ENCODE measurements at regions of chr11 and their contacts with region 1.

Region 1: DNA sequence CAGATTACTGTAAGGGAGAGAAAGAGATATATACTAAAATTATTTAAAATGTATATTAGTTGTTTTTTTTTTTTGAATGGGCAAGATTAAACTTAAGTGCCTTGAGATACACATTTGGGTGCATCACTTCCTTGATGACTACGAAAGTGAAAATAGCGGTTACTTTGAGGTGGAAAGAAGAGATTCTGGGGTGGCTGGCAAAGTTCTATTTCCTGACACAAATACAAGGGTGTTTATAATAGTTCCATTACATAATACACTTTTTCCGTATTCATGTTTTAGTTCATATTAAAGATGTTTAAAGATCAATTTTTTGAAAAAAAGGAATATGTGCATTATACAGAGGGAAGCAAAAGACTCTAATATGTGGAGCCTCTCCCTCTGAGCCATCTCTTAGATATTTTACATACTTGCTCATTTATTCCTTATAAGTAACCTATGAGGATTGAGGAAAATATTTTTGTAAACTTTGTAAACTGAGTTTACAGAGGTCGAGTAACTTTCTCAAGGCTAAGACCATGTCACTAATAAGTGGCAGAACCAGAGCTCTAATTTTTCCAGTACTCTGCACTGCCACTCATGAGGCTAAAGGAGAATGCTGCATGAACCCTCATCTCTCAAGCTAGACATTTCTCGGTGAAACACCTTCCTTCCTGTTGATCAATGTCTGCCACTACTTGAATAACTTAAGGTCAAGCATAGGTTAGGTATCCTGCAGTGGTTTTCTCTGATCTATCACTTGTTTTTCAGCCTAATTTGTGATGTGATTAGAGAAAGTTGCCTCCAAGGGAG is 58.6 kb downstream of the DDIAS start:
- DNase-seq: peak; percentile 81
- H3K4me3 ChIP-seq: peak overlapping the region; percentile 54
- H3K27ac ChIP-seq: peak overlapping the region; percentile 89
- H3K4me1 ChIP-seq: peaks cover 66% of the 10 kb centered on the region
- CTCF ChIP-seq: no peak

Region 2: GRCh38 chr11:82560836-82561235 is 399.3 kb before region 1 on chr11:
- CTCF ChIA-PET with region 1: no interaction called
- POLR2A ChIA-PET with region 1: no interaction called
- intact Hi-C with region 1: no loop called
- DNase-seq: no peak
- H3K4me3 ChIP-seq: no peak overlapping the region
- H3K27ac ChIP-seq: no peak overlapping the region
- H3K4me1 ChIP-seq: peaks cover 18% of the 10 kb centered on the region
- CTCF ChIP-seq: no peak

Region 3: DNA sequence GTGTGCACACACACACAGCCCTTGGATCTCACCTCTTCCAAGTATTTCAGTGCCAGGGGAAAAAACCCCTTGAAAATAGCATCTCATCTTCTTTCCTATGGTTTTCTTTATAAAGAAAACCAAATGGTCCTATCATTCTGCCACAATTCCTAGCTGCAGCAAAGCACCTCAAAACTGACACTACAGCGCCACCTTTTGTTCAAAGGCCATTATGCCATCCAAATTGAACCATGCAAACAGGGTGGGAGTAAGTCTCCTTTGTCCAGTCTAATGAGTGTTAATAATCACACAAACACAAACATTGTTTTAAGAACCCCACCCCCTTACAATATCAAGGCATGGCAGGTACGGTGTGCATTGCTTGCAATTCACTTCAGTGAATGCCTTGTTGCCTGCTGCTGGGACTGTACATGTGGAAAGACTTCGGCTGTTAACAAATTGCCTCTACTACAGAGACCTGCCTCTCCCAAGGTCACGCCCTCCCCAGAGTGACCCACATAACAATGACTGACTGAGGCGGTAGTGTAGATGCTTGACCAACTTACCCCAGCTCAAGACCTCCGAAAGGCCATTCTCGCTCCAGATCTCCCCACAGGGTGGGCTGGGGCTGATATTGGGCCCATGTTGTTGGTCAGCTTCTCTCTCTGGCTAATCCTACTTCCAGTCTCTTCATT is 258.2 kb before region 1 on chr11:
- CTCF ChIA-PET with region 1: no interaction called
- POLR2A ChIA-PET with region 1: no interaction called
- intact Hi-C with region 1: no loop called
- DNase-seq: peak; percentile 41
- H3K4me3 ChIP-seq: no peak overlapping the region
- H3K27ac ChIP-seq: no peak overlapping the region
- H3K4me1 ChIP-seq: no peaks in the 10 kb centered on the region
- CTCF ChIP-seq: peak; percentile 88

Region 4: DNA sequence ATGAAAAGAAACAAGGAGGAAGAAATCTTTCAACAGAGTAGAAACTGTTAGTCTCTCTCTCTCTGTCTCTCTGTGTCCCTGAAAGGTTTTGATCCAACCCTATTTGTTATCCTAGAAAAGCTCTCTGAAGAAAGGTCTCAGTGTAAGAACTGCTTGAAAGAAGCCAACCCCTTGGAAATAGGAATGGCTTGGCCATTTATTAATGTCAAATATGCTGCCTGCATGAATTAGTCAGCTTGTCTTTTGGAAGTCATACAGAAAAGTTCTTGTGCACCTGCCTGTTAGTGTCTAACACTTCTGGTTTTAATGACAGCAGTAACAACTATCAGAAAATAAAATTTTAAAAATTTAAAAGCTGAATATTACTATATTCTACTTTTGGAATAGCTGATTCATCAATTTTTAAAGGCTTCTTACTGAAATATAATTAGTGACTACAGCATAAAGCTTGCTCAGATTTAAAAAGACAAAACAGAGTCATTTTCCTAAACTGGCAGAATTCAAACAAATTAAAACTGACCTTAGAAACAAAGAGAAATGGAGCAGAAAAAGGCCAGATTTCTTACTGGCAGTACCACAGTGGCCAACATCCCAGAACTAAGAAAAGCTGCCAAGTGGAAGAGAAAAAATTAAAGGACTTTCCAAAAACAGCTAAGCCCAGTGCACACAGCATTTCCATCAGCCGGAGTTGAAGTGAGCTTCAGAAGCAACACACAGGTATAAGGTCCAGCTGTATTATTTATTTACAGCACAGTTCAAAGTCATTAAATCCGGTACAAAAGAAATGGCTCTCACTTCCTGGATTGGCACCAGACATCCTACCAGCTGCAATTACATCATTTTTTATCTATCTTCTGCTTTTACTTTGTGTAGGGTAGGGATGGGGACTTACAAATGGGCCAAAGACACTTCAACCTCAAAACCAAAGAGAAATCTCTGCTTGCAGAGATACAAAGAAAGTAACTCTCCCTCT is 136.2 kb before region 1 on chr11:
- CTCF ChIA-PET with region 1: no interaction called
- POLR2A ChIA-PET with region 1: no interaction called
- intact Hi-C with region 1: no loop called
- DNase-seq: peak; percentile 57
- H3K4me3 ChIP-seq: no peak overlapping the region
- H3K27ac ChIP-seq: no peak overlapping the region
- H3K4me1 ChIP-seq: peaks cover 17% of the 10 kb centered on the region
- CTCF ChIP-seq: no peak

Region 5: GRCh38 chr11:82945682-82946081 is 14.5 kb before region 1 on chr11:
- CTCF ChIA-PET with region 1: interaction called, 3 read pairs
- POLR2A ChIA-PET with region 1: interaction called, 83 read pairs
- intact Hi-C with region 1: no loop called
- DNase-seq: no peak
- H3K4me3 ChIP-seq: no peak overlapping the region
- H3K27ac ChIP-seq: no peak overlapping the region
- H3K4me1 ChIP-seq: peaks cover 16% of the 10 kb centered on the region
- CTCF ChIP-seq: no peak

Region 6: GRCh38 chr11:82974851-82975250 is 14.7 kb after region 1 on chr11:
- CTCF ChIA-PET with region 1: no interaction called
- POLR2A ChIA-PET with region 1: interaction called, 53 read pairs
- intact Hi-C with region 1: no loop called
- DNase-seq: no peak
- H3K4me3 ChIP-seq: peak overlapping the region; percentile 9
- H3K27ac ChIP-seq: peak overlapping the region; percentile 98
- H3K4me1 ChIP-seq: peaks cover 96% of the 10 kb centered on the region
- CTCF ChIP-seq: no peak

Region 7: GRCh38 chr11:83057721-83058120 is 97.5 kb after region 1 on chr11:
- CTCF ChIA-PET with region 1: no interaction called
- POLR2A ChIA-PET with region 1: interaction called, 11 read pairs
- intact Hi-C with region 1: no loop called
- DNase-seq: no peak
- H3K4me3 ChIP-seq: no peak overlapping the region
- H3K27ac ChIP-seq: no peak overlapping the region
- H3K4me1 ChIP-seq: peaks cover 93% of the 10 kb centered on the region
- CTCF ChIP-seq: no peak

Region 8: GRCh38 chr11:83078269-83078668 is 118.1 kb after region 1 on chr11:
- CTCF ChIA-PET with region 1: no interaction called
- POLR2A ChIA-PET with region 1: interaction called, 11 read pairs
- intact Hi-C with region 1: no loop called
- DNase-seq: no peak
- H3K4me3 ChIP-seq: no peak overlapping the region
- H3K27ac ChIP-seq: no peak overlapping the region
- H3K4me1 ChIP-seq: peaks cover 12% of the 10 kb centered on the region
- CTCF ChIP-seq: no peak

Region 9: DNA sequence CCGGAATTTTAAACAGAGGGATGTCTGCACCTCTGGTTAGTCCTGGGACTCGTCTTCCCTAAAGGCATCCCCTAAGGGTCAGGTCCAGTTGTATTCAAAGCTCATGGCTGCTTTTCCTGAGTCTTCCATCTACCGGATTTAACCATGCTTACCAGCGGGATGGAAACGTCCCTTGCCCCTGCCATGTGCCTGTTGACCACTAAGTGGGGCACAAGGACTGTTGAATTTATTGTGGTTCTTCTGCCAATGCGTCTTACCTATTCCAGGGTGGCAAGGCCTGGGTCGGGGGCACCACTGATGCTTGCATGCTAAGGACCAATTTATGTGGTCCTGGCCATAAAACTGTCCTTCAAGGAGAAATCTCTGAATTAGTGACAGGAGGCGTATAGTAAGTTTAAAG is 258.9 kb after region 1 on chr11:
- CTCF ChIA-PET with region 1: no interaction called
- POLR2A ChIA-PET with region 1: no interaction called
- intact Hi-C with region 1: no loop called
- DNase-seq: peak; percentile 8
- H3K4me3 ChIP-seq: no peak overlapping the region
- H3K27ac ChIP-seq: no peak overlapping the region
- H3K4me1 ChIP-seq: no peaks in the 10 kb centered on the region
- CTCF ChIP-seq: peak; percentile 52

Measured in OCI-LY7 (cell line).